Activated CD4-positive, alpha-beta T cell treated with anti-CD3 and anti-CD28 coated beads for 36 hours (primary cell): ENCODE measurements at regions of chr1 and their contacts with region 1.

Region 1: GRCh38 chr1:62436466-62437256 is at the start of gene USP1:
- DNase-seq: peak; percentile 99
- ATAC-seq: peak; percentile 92
- H3K4me3 Mint-ChIP-seq: peak within 1 kb of the TSS; percentile 89
- H3K27ac Mint-ChIP-seq: peak within 1 kb of the TSS; percentile 98
- H3K4me1 Mint-ChIP-seq: peaks cover 29% of the 10 kb centered on the region
- H3K27me3 Mint-ChIP-seq: no peaks in the 10 kb centered on the region
- total RNA-seq, gene USP1: 62.4 to 73.4 TPM

Region 2: GRCh38 chr1:61741711-61742619 is 694.7 kb before region 1 on chr1 and contains the start of gene PATJ:
- CTCF ChIA-PET with region 1: no interaction called
- POLR2A ChIA-PET with region 1: no interaction called
- intact Hi-C with region 1: loop called in 1 of 2 experiments (anchors 5 kb)
- DNase-seq: peak; percentile 77
- ATAC-seq: peak; percentile 85
- H3K4me3 Mint-ChIP-seq: peak within 1 kb of the TSS; percentile 86
- H3K27ac Mint-ChIP-seq: peak within 1 kb of the TSS; percentile 92
- H3K4me1 Mint-ChIP-seq: peaks cover 24% of the 10 kb centered on the region
- H3K27me3 Mint-ChIP-seq: no peaks in the 10 kb centered on the region
- total RNA-seq, gene PATJ: 12.6 to 12.8 TPM

Region 3: DNA sequence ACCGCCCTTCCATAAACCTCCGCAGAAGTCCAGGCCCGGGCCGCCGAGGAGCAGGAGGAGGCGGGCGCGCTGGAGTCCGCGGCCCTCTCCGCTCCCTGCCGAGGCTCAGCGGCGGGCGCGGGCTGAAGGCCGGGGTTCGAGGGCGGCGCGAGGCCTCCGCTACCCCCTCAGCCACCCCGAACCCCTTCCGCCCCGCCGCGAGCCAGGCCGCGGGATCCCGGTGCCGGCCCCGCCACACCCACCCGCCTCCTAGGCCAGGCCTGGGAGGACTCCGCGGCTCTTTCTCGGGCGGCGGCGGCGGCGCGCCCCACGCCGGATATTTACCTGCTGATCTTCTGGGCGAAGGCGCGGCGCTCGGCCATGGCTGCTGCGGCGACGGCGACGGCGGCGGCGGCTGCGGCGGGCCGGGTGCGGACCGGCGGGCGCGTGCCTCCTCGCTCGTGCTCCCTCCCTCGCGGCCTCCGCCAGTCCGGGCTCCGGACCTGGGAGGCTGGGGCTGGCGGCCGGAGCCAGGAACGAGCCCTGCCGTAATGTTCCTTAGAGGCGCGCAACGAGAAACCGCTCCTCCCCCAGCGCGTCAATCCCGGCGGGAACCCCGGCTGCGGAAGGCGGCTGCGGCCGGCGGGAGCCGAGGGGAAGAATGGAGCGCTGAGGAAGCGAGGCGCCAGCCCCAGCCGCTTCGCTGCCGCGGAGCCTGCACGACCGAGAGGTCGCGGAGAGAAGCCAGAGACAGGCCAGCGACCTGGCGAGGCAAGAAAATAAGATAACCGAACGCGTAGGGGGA is 251.4 kb after region 1 on chr1 and contains the start of gene DOCK7:
- CTCF ChIA-PET with region 1: no interaction called
- POLR2A ChIA-PET with region 1: no interaction called
- intact Hi-C with region 1: loop called (anchors 1 to 5 kb)
- DNase-seq: peak; percentile 69
- ATAC-seq: peak; percentile 64
- H3K4me3 Mint-ChIP-seq: peak within 1 kb of the TSS; percentile 88
- H3K27ac Mint-ChIP-seq: peak within 1 kb of the TSS; percentile 87
- H3K4me1 Mint-ChIP-seq: peaks cover 30% of the 10 kb centered on the region
- H3K27me3 Mint-ChIP-seq: no peaks in the 10 kb centered on the region
- total RNA-seq, gene DOCK7: 11.9 to 13.7 TPM

Region 4: GRCh38 chr1:63322114-63322943 is 885.7 kb after region 1 on chr1 and contains the start of gene FOXD3:
- CTCF ChIA-PET with region 1: no interaction called
- POLR2A ChIA-PET with region 1: no interaction called
- intact Hi-C with region 1: loop called in 1 of 2 experiments (anchors 5 kb)
- DNase-seq: peak; percentile 64
- ATAC-seq: peak; percentile 34
- H3K4me3 Mint-ChIP-seq: peak within 1 kb of the TSS; percentile 68
- H3K27ac Mint-ChIP-seq: peak within 1 kb of the TSS; percentile 37
- H3K4me1 Mint-ChIP-seq: peaks cover 43% of the 10 kb centered on the region
- H3K27me3 Mint-ChIP-seq: peaks cover 68% of the 10 kb centered on the region
- total RNA-seq, gene FOXD3: not detected

Region 5: DNA sequence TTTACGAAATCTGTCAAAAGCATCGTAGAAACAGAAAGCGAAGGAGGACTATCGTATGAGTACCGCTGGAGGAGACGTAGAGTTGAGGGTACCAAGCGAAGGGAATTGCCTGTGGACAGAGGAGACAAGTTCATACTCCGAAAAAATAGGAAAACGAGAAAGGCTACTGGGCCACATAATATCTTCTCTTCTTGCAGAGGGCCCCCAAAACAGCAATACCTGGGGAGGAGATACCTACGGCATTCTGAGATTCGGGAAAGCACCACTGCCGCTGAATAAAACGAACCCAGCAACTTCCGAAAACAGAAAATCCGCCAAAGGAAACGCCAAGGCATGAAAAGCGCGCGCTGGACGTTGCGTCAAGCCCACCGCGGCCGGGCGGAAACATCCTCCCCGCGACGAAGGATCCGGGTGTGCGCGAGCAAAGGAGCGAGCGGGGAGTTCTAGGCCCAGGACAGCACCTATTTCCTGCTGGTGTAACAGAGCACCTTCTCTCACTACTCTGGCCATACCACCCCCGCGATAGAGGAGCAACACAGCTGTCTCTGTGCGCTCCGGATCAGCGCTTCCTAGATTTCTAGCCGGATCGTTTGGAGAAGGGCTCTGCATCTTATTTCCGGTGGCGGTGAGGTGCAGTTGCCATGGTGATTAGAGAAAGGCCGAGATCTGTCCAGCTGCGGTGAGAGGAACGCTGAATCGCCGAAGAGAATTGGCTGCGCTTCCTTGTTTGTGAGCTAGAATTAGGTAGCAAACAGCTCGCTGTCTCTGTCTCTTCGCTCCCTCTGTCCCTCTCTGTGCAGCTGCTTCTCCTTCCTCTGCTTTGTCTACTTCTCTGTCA is 1086.4 kb after region 1 on chr1 and contains the starts of genes EFCAB7 and ITGB3BP:
- CTCF ChIA-PET with region 1: no interaction called
- POLR2A ChIA-PET with region 1: no interaction called
- intact Hi-C with region 1: loop called in 1 of 2 experiments (anchors 2 kb)
- DNase-seq: peak; percentile 90
- ATAC-seq: peak; percentile 93
- H3K4me3 Mint-ChIP-seq: peak within 1 kb of the TSS; percentile 89
- H3K27ac Mint-ChIP-seq: peak within 1 kb of the TSS; percentile 97
- H3K4me1 Mint-ChIP-seq: peaks cover 18% of the 10 kb centered on the region
- H3K27me3 Mint-ChIP-seq: no peaks in the 10 kb centered on the region
- total RNA-seq, gene EFCAB7: 8.5 to 9.1 TPM
- total RNA-seq, gene ITGB3BP: 81.8 to 81.9 TPM